H1 (cell line): ENCODE measurements at regions of chr12 and their contacts with region 1.

Region 1: DNA sequence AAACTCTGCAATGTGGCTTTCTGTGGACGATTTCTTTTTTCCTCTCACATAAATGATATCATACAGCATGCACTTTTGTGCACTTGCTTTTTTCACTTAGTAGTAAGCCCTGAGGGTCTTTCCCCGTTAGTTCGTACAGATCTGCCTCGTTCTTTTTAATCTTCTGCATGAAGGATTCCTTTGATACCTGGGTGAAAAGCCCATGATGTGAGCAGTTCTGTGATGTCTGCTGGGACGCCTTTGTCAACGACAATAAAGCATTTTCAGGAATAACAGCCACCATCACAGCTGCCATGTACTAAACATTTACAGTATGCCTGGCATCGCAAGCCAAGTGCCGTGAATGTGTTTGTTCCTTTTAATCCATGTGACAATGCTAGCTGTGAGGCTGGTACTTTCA is 99.2 kb downstream of the KSR2 start:
- DNase-seq: no peak
- H3K4me3 ChIP-seq: no peak overlapping the region
- H3K27ac ChIP-seq: no peak overlapping the region
- H3K4me1 ChIP-seq: no peaks in the 10 kb centered on the region
- H3K27me3 ChIP-seq: no peaks in the 10 kb centered on the region
- CTCF ChIP-seq: no peak
- EP300 ChIP-seq: no peak
- POLR2A ChIP-seq: no peak
- RAD21 ChIP-seq: no peak

Region 2: DNA sequence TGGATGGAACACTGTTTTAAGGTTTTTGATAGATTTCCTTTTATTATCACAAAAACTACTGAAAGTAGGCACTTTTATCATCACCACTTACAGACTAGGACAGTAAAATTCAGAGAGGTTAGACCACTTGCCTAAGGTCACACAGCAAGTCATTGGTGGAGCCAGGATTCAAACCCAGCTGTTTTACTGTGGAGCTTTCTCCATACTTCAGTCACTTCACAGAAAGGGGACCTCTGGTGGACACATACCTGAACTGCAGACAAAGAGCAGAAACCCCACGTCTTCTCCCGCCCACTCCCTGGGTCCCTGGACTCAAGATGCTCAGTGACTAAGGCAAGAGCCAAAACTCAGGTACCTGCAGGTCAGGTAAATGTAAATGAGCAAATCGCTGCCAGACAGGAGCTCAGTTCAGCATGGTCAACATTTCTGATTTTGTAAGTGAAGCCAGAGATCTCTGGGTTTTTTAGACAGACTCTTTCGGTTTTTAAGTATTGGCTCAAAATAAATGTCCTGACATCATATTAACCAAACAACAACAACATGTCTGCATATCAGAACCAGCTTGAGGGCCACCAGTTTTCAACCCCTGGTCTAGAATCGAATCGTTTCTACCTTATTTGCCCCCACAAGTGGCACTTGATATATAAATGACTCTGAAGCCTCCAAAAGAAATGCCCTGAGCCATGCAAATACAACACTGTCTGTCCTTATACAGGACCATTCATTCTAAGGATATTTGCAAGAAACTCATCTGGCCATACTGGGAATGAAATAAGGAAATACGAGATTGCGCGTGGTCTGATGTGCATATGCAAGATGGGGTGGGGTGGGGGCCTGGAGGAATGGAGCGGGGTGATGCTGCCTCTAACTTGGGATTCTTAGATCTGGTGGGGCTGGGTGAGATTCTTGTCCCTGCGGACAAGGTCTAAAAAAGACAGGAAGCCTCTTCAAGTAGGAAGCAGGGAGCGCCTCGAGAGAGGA is 11.6 kb before region 1 on chr12:
- CTCF ChIA-PET with region 1: interaction called, 19 read pairs
- POLR2A ChIA-PET with region 1: no interaction called
- DNase-seq: peak; percentile 49 to 87
- H3K4me3 ChIP-seq: no peak overlapping the region
- H3K27ac ChIP-seq: no peak overlapping the region
- H3K4me1 ChIP-seq: no peaks in the 10 kb centered on the region
- H3K27me3 ChIP-seq: no peaks in the 10 kb centered on the region
- CTCF ChIP-seq: peak; percentile 51 to 86 (median 52)
- EP300 ChIP-seq: no peak
- POLR2A ChIP-seq: no peak
- RAD21 ChIP-seq: peak in 1 of 2 experiments; percentile 41; a peak in 2 of 4 replicates